CD8-positive, alpha-beta T cell (primary cell): ENCODE measurements at regions of chr12 and their contacts with region 1.

Region 1: DNA sequence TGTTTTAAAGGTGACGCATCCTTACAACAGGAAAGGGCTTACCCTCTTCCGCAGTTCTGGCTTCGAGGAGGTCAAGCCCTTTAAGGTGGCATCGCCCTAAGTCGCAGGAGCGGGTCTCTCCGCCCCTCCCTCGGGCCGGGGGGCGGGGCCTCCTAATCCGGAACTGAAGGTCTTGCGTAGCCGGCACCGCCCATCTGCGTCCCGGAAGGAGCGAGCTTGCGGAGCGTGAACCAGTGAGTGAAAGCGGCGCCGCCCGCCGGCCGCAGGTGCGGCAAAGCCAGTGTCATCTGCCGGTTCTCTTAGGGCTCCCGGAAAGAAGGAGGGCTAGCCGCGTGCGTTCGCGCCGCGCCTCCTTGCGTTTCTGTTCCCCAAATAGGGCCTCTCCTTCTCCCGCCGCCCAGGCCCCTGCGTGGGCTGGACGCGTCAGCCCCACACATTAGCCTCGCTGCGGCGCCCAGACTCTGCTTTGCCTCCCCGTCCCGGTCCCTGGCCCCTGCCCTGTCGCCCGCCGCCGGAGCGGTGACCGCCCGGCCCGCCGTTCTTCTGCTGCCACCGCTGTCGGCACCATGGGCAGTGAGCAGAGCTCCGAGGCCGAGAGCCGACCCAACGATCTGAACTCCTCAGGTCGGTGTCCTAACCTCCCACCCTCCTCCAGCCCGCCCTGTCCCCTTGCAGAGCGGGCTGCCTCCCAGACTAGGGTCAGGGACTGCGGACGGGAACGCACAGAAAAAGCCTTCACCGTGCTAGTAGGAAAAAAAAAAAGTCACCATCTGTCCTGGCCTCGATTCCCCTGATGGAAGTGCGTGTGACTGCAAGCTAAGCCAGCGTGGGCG is at the start of gene BORCS5:
- DNase-seq: peak; percentile 97 to 99 (median 99)
- ATAC-seq: peak; percentile 91
- H3K4me3 ChIP-seq: peak within 1 kb of the TSS; percentile 69 to 83
- H3K4me3 Mint-ChIP-seq: peak within 1 kb of the TSS; percentile 90
- H3K27ac ChIP-seq: peak within 1 kb of the TSS; percentile 85 to 95
- H3K27ac Mint-ChIP-seq: peak within 1 kb of the TSS; percentile 96
- H3K4me1 ChIP-seq: peaks cover 31% of the 10 kb centered on the region
- H3K4me1 Mint-ChIP-seq: peaks cover 48% of the 10 kb centered on the region
- H3K27me3 ChIP-seq: no peaks in the 10 kb centered on the region
- H3K27me3 Mint-ChIP-seq: no peaks in the 10 kb centered on the region
- CTCF ChIP-seq: peak; percentile 10
- total RNA-seq, gene BORCS5: 33.8 to 38.8 TPM

Region 2: GRCh38 chr12:11648831-11649702 is 708.0 kb before region 1 on chr12 and contains the start of gene ETV6:
- CTCF ChIA-PET with region 1: no interaction called
- POLR2A ChIA-PET with region 1: no interaction called
- intact Hi-C with region 1: loop called (anchors 2 to 10 kb)
- DNase-seq: peak; percentile 22 to 88 (median 64)
- ATAC-seq: peak; percentile 50
- H3K4me3 ChIP-seq: peak within 1 kb of the TSS; percentile 92 to 98
- H3K4me3 Mint-ChIP-seq: peak within 1 kb of the TSS; percentile 96
- H3K27ac ChIP-seq: peak within 1 kb of the TSS; percentile 75 to 76
- H3K27ac Mint-ChIP-seq: peak within 1 kb of the TSS; percentile 94
- H3K4me1 ChIP-seq: peaks cover 31% of the 10 kb centered on the region
- H3K4me1 Mint-ChIP-seq: peaks cover 38% of the 10 kb centered on the region
- H3K27me3 ChIP-seq: no peaks in the 10 kb centered on the region
- H3K27me3 Mint-ChIP-seq: no peaks in the 10 kb centered on the region
- CTCF ChIP-seq: no peak
- total RNA-seq, gene ETV6: 11.3 to 13.9 TPM

Region 3: GRCh38 chr12:11676052-11676451 is 681.0 kb before region 1 on chr12:
- CTCF ChIA-PET with region 1: no interaction called
- POLR2A ChIA-PET with region 1: no interaction called
- intact Hi-C with region 1: no loop called
- DNase-seq: no peak
- ATAC-seq: no peak
- H3K4me3 ChIP-seq: no peak overlapping the region
- H3K4me3 Mint-ChIP-seq: no peak overlapping the region
- H3K27ac ChIP-seq: no peak overlapping the region
- H3K27ac Mint-ChIP-seq: no peak overlapping the region
- H3K4me1 ChIP-seq: peaks cover 8% of the 10 kb centered on the region
- H3K4me1 Mint-ChIP-seq: peaks cover 44% of the 10 kb centered on the region
- H3K27me3 ChIP-seq: no peaks in the 10 kb centered on the region
- H3K27me3 Mint-ChIP-seq: no peaks in the 10 kb centered on the region
- CTCF ChIP-seq: no peak

Region 4: GRCh38 chr12:12319451-12320183 is 37.5 kb before region 1 on chr12:
- CTCF ChIA-PET with region 1: no interaction called
- POLR2A ChIA-PET with region 1: no interaction called
- intact Hi-C with region 1: no loop called
- DNase-seq: no peak
- ATAC-seq: no peak
- H3K4me3 ChIP-seq: no peak overlapping the region
- H3K4me3 Mint-ChIP-seq: no peak overlapping the region
- H3K27ac ChIP-seq: no peak overlapping the region
- H3K27ac Mint-ChIP-seq: no peak overlapping the region
- H3K4me1 ChIP-seq: no peaks in the 10 kb centered on the region
- H3K4me1 Mint-ChIP-seq: no peaks in the 10 kb centered on the region
- H3K27me3 ChIP-seq: no peaks in the 10 kb centered on the region
- H3K27me3 Mint-ChIP-seq: peaks cover 8% of the 10 kb centered on the region
- CTCF ChIP-seq: no peak

Region 5: GRCh38 chr12:12376646-12377448 is 19.7 kb after region 1 on chr12:
- CTCF ChIA-PET with region 1: interaction called, 14 read pairs
- POLR2A ChIA-PET with region 1: interaction called, 8 read pairs
- intact Hi-C with region 1: loop called in 1 of 2 experiments (anchors 2 kb)
- DNase-seq: peak in 3 of 9 experiments; percentile 37 to 87 (median 76)
- ATAC-seq: peak; percentile 39
- H3K4me3 ChIP-seq: no peak overlapping the region
- H3K4me3 Mint-ChIP-seq: no peak overlapping the region
- H3K27ac ChIP-seq: no peak overlapping the region
- H3K27ac Mint-ChIP-seq: peak overlapping the region; percentile 60
- H3K4me1 ChIP-seq: peaks cover 21% of the 10 kb centered on the region
- H3K4me1 Mint-ChIP-seq: peaks cover 37% of the 10 kb centered on the region
- H3K27me3 ChIP-seq: no peaks in the 10 kb centered on the region
- H3K27me3 Mint-ChIP-seq: no peaks in the 10 kb centered on the region
- CTCF ChIP-seq: peak; percentile 79

Region 6: DNA sequence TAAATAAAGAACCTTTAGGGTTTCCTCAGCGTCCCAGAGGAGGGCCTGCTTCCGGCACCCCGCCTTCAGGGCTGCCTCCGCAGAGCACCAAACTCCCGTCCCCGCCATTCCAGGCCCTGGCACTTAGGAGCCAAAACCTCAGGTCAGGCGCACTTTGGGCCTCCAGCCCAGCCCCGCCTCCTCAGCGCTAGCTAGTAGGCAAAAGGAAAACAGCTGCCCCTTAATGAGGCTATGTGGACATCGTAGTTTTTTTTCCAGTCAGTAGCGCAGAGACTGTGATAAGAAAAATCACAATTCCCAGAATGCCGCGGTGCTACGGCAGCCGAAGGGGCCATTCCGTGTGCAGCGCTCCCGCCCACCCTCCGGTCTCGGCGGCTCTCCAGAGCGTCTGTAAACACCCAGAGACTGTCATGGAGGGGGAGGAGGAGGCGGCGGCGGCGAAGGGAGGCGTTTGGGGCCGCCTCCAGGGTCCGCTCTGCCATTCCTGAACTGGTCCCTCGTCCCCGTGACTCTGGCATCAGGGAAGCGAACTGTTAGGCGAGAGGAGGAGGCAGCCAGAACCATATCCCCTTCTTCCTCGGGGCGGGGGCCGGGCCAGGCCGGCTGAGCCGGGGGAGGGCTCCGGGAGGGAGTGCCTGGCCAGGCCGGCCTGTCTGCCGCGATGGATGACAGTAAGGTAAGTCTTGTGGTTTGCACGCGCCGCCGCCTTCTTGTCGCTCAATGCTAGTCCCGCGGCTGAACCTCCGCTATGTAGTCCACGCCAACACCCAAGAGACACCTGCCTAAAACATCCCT is 254.6 kb after region 1 on chr12 and contains the start of gene CREBL2:
- CTCF ChIA-PET with region 1: no interaction called
- POLR2A ChIA-PET with region 1: interaction called, 9 read pairs
- intact Hi-C with region 1: loop called (anchors 1 to 2 kb)
- DNase-seq: peak; percentile 72 to 95 (median 85)
- ATAC-seq: peak; percentile 90
- H3K4me3 ChIP-seq: peak within 1 kb of the TSS; percentile 72 to 90
- H3K4me3 Mint-ChIP-seq: peak within 1 kb of the TSS; percentile 88
- H3K27ac ChIP-seq: peak within 1 kb of the TSS; percentile 82 to 89
- H3K27ac Mint-ChIP-seq: peak within 1 kb of the TSS; percentile 95
- H3K4me1 ChIP-seq: peaks cover 52% of the 10 kb centered on the region
- H3K4me1 Mint-ChIP-seq: peaks cover 53% of the 10 kb centered on the region
- H3K27me3 ChIP-seq: no peaks in the 10 kb centered on the region
- H3K27me3 Mint-ChIP-seq: no peaks in the 10 kb centered on the region
- CTCF ChIP-seq: no peak
- total RNA-seq, gene CREBL2: 10.2 to 11.8 TPM

Region 7: GRCh38 chr12:12716793-12717585 is 359.9 kb after region 1 on chr12 and contains the start of gene CDKN1B:
- CTCF ChIA-PET with region 1: interaction called, 6 read pairs
- POLR2A ChIA-PET with region 1: interaction called, 43 read pairs
- intact Hi-C with region 1: loop called (anchors 1 to 5 kb)
- DNase-seq: peak; percentile 76 to 93 (median 86)
- ATAC-seq: peak; percentile 62
- H3K4me3 ChIP-seq: peak within 1 kb of the TSS; percentile 95 to 96
- H3K4me3 Mint-ChIP-seq: peak within 1 kb of the TSS; percentile 98
- H3K27ac ChIP-seq: peak within 1 kb of the TSS; percentile 93 to 97
- H3K27ac Mint-ChIP-seq: peak within 1 kb of the TSS; percentile 98
- H3K4me1 ChIP-seq: peaks cover 47% of the 10 kb centered on the region
- H3K4me1 Mint-ChIP-seq: peaks cover 66% of the 10 kb centered on the region
- H3K27me3 ChIP-seq: no peaks in the 10 kb centered on the region
- H3K27me3 Mint-ChIP-seq: no peaks in the 10 kb centered on the region
- CTCF ChIP-seq: no peak
- total RNA-seq, gene CDKN1B: 240 to 245 TPM

Region 8: DNA sequence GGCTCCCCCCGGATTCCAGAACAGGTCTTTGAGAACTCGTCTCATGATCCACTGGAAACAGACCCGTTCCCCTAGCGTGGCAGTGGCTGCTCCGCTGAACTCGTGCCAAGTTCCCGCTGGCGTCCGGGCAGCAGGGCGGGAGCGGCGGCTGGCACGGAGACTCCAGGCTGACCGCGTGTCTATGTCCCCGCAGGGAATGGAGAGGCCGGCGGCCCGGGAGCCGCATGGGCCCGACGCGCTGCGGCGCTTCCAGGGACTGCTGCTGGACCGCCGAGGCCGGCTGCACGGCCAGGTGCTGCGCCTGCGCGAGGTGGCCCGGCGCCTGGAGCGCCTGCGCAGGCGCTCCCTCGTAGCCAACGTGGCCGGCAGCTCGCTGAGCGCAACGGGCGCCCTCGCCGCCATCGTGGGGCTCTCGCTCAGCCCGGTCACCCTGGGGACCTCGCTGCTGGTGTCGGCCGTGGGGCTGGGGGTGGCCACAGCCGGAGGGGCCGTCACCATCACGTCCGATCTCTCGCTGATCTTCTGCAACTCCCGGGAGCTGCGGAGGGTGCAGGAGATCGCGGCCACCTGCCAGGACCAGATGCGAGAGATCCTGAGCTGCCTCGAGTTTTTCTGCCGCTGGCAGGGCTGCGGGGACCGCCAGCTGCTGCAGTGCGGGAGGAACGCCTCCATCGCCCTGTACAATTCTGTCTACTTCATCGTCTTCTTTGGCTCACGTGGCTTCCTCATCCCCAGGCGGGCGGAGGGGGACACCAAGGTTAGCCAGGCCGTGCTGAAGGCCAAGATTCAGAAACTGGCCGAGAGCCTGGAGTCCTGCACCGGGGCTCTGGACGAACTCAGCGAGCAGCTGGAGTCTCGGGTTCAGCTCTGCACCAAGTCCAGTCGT is 429.9 kb after region 1 on chr12:
- CTCF ChIA-PET with region 1: interaction called, 3 read pairs
- POLR2A ChIA-PET with region 1: interaction called, 3 read pairs
- intact Hi-C with region 1: loop called in 1 of 2 experiments (anchors 1 kb)
- DNase-seq: peak; percentile 47 to 90 (median 71)
- ATAC-seq: peak; percentile 90
- H3K4me3 ChIP-seq: peak overlapping the region; percentile 68 to 70
- H3K4me3 Mint-ChIP-seq: peak overlapping the region; percentile 77
- H3K27ac ChIP-seq: peak overlapping the region; percentile 72 to 73
- H3K27ac Mint-ChIP-seq: peak overlapping the region; percentile 87
- H3K4me1 ChIP-seq: peaks cover 16% of the 10 kb centered on the region
- H3K4me1 Mint-ChIP-seq: peaks cover 22% of the 10 kb centered on the region
- H3K27me3 ChIP-seq: no peaks in the 10 kb centered on the region
- H3K27me3 Mint-ChIP-seq: no peaks in the 10 kb centered on the region
- CTCF ChIP-seq: no peak

Region 9: GRCh38 chr12:12999959-13000615 is 643.0 kb after region 1 on chr12 and contains the start of gene HEBP1:
- CTCF ChIA-PET with region 1: no interaction called
- POLR2A ChIA-PET with region 1: no interaction called
- intact Hi-C with region 1: loop called (anchors 5 kb)
- DNase-seq: peak; percentile 90 to 98 (median 96)
- ATAC-seq: peak; percentile 95
- H3K4me3 ChIP-seq: peak within 1 kb of the TSS; percentile 84 to 85
- H3K4me3 Mint-ChIP-seq: peak within 1 kb of the TSS; percentile 96
- H3K27ac ChIP-seq: peak within 1 kb of the TSS; percentile 41 to 55
- H3K27ac Mint-ChIP-seq: peak within 1 kb of the TSS; percentile 82
- H3K4me1 ChIP-seq: peaks cover 20% of the 10 kb centered on the region
- H3K4me1 Mint-ChIP-seq: peaks cover 29% of the 10 kb centered on the region
- H3K27me3 ChIP-seq: peaks cover 0 to 4% of the 10 kb centered on the region in 2 experiments
- H3K27me3 Mint-ChIP-seq: peaks cover 6% of the 10 kb centered on the region
- CTCF ChIP-seq: no peak
- total RNA-seq, gene HEBP1: 4.6 to 5.6 TPM